ENCODE measurements at regions of chr14 and their contacts with region 1.

Region 1: GRCh38 chr14:21149641-21150367 is 6.1 kb downstream of the OR5AU1 start:
- DNase-seq: no peak
- ATAC-seq: no peak
- H3K4me3 ChIP-seq: no peak overlapping the region
- H3K4me3 Mint-ChIP-seq: no peak overlapping the region
- H3K27ac ChIP-seq: no peak overlapping the region
- H3K27ac Mint-ChIP-seq: no peak overlapping the region
- H3K4me1 ChIP-seq: no peaks in the 10 kb centered on the region
- H3K4me1 Mint-ChIP-seq: no peaks in the 10 kb centered on the region
- H3K27me3 ChIP-seq: no peaks in the 10 kb centered on the region
- H3K27me3 Mint-ChIP-seq: peaks cover 4% of the 10 kb centered on the region
- CTCF ChIP-seq: no peak

Region 2: DNA sequence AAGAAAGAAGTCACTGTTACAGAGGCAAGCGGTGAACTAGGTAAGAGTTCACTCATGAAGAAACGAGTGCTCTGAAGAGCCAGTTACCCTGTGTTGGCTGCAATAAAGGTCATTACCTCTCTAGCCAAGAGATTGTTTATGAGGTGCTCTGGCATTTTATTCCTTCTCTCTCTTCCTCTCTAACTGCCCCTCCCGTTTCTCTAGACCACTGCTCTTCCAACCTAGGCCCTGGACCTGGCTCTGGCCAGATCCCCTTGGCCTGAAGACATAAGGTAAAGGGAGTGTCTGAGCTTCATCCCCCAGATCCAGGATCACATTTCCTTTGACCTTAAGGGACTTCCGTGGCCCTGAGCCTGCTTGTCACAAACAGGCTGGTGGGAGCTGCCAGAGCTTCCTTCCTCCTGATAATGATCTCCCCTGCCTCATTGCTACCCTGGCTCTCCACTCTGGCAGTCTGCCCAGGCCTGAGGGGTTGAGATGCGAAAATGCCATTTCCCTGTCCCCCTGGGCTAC is 105.6 kb before region 1 on chr14:
- CTCF ChIA-PET with region 1: no interaction called
- POLR2A ChIA-PET with region 1: no interaction called
- intact Hi-C with region 1: no loop called
- DNase-seq: peak in 4 of 14 experiments; percentile 30 to 44 (median 40)
- ATAC-seq: peak; percentile 46
- H3K4me3 ChIP-seq: no peak overlapping the region
- H3K4me3 Mint-ChIP-seq: no peak overlapping the region
- H3K27ac ChIP-seq: no peak overlapping the region
- H3K27ac Mint-ChIP-seq: no peak overlapping the region
- H3K4me1 ChIP-seq: peaks cover 15% of the 10 kb centered on the region
- H3K4me1 Mint-ChIP-seq: peaks cover 11% of the 10 kb centered on the region
- H3K27me3 ChIP-seq: no peaks in the 10 kb centered on the region
- H3K27me3 Mint-ChIP-seq: peaks cover 17% of the 10 kb centered on the region
- CTCF ChIP-seq: no peak

Region 3: DNA sequence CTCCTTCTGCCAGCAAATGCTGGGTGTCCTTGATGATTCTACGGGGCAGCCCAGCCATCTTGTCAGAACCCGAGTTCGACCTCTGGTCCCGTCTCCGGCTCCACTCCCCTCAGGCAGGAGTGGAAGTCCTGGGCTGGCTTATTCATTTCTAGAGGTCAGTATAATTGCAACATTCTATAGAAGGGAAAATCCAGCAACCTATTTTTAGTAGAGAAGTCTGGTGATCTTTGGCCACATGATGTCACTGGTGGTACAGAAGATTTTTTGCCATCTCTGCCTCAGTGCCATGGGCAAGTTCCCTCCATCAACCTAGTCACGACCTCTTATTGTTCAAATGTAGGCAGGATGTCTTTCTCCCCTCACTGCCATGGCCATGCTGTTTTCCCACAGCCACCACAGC is 462.5 kb after region 1 on chr14:
- CTCF ChIA-PET with region 1: no interaction called
- POLR2A ChIA-PET with region 1: no interaction called
- intact Hi-C with region 1: loop called in 1 of 2 experiments (anchors 10 kb)
- DNase-seq: peak in 2 of 14 experiments; percentile 1 to 6
- ATAC-seq: no peak
- H3K4me3 ChIP-seq: no peak overlapping the region
- H3K4me3 Mint-ChIP-seq: no peak overlapping the region
- H3K27ac ChIP-seq: no peak overlapping the region
- H3K27ac Mint-ChIP-seq: no peak overlapping the region
- H3K4me1 ChIP-seq: no peaks in the 10 kb centered on the region
- H3K4me1 Mint-ChIP-seq: no peaks in the 10 kb centered on the region
- H3K27me3 ChIP-seq: no peaks in the 10 kb centered on the region
- H3K27me3 Mint-ChIP-seq: peaks cover 30% of the 10 kb centered on the region
- CTCF ChIP-seq: no peak

Measured in CD4-positive, alpha-beta T cell (primary cell).